Psoas muscle (tissue), 8 donors: ENCODE measurements at regions of chr14 and their contacts with region 1.

Region 1: GRCh38 chr14:105709281-105710118 is 183.1 kb downstream of the TMEM121 start:
- DNase-seq: peak in 1 of 2 donors; percentile 32
- ATAC-seq: peak in 1 of 4 donors; percentile 17
- H3K4me3 ChIP-seq: no peak overlapping the region
- H3K27ac ChIP-seq: no peak overlapping the region
- H3K4me1 ChIP-seq: no peaks in the 10 kb centered on the region
- H3K27me3 ChIP-seq: no peaks in the 10 kb centered on the region
- CTCF ChIP-seq: no peak

Region 2: DNA sequence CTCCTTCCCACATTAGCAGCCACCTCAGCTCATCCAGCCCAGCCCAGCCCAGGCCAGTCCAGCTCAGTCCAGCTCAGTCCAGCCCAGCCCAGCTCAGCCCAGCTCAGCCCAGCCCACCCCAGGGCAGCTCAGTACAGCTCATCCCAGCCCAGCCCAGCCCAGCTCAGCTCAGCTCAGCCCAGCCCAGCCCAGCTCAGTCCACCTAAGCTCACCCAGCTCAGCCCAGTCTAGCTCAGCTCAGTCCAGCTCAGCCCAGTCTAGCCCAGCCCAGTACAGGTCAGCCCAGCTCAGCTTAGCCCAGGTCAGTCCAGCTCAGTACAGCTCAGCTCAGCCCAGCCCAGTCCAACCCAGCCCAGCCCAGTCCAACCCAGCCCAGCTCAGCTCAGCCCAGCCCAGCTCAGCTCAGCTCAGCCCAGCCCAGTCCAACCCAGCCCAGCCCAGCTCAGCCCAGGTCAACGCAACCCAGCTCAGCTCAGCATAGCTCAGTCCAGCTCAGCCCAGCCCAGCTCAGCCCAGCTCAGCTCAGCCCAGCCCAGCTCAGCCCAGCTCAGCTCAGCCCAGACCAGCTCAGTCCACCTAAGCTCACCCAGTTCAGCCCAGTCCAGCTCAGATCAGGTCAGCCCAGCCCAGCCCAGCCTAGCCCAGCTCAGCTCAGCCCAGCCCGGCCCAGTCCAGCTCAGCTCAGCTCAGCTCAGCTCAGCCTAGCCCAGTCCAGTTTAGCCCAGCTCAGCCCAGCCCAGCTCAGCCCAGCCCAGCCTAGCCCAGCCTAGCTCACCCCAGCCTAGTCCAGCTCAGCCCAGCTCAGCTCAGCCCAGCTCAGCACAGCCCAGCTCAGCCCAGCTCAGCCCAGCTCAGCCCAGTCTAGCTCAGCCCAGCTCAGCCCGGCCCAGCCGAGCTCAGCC is 120.1 kb before region 1 on chr14:
- intact Hi-C with region 1: loop called (anchors 5 kb)
- DNase-seq: peak in 1 of 2 donors; percentile 10
- ATAC-seq: no peak
- H3K4me3 ChIP-seq: no peak overlapping the region
- H3K27ac ChIP-seq: no peak overlapping the region
- H3K4me1 ChIP-seq: no peaks in the 10 kb centered on the region
- H3K27me3 ChIP-seq: no peaks in the 10 kb centered on the region
- CTCF ChIP-seq: no peak

Region 3: DNA sequence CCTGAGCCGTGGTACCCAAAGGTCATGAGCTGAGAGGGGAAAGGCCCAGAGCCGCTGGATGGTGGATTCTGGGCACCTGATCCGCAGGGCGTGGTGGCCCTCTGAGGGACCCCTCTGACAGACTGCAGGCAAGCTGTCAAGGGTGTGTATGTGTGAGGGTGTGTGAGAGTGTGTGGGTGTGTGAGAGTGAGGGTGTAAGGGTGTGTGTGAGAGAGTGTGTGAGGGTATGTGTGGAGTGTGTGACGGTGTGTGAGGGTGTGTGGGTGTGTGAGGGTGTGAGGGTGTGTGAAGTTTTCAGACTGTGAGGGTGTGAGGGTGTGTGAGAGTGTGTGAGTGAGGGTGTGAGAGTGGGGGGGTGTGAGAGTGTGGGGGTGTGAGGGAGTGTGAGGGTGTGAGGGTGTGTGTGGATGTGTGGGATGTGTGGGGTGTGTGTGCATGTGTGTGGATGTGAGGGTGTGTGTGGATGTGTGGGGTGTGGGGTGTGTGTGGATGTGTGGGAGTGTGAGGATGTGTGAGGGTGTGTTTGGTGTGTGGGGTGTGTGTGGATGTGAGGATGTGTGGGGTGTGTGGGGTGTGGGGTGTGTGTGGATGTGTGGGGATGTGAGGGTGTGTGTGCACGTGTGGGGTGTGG is 26.4 kb before region 1 on chr14:
- intact Hi-C with region 1: no loop called
- DNase-seq: no peak
- ATAC-seq: no peak
- H3K4me3 ChIP-seq: no peak overlapping the region
- H3K27ac ChIP-seq: no peak overlapping the region
- H3K4me1 ChIP-seq: no peaks in the 10 kb centered on the region
- H3K27me3 ChIP-seq: no peaks in the 10 kb centered on the region
- CTCF ChIP-seq: no peak

Region 4: GRCh38 chr14:105857826-105858687 is 148.6 kb after region 1 on chr14:
- intact Hi-C with region 1: no loop called
- DNase-seq: peak in 1 of 2 donors; percentile 53
- ATAC-seq: no peak
- H3K4me3 ChIP-seq: no peak overlapping the region
- H3K27ac ChIP-seq: no peak overlapping the region
- H3K4me1 ChIP-seq: no peaks in the 10 kb centered on the region
- H3K27me3 ChIP-seq: no peaks in the 10 kb centered on the region
- CTCF ChIP-seq: no peak